Activated naive CD4-positive, alpha-beta T cell treated with anti-CD3 and anti-CD28 coated beads for 36 hours (primary cell): ENCODE measurements at regions of chrX and their contacts with region 1.

Region 1: DNA sequence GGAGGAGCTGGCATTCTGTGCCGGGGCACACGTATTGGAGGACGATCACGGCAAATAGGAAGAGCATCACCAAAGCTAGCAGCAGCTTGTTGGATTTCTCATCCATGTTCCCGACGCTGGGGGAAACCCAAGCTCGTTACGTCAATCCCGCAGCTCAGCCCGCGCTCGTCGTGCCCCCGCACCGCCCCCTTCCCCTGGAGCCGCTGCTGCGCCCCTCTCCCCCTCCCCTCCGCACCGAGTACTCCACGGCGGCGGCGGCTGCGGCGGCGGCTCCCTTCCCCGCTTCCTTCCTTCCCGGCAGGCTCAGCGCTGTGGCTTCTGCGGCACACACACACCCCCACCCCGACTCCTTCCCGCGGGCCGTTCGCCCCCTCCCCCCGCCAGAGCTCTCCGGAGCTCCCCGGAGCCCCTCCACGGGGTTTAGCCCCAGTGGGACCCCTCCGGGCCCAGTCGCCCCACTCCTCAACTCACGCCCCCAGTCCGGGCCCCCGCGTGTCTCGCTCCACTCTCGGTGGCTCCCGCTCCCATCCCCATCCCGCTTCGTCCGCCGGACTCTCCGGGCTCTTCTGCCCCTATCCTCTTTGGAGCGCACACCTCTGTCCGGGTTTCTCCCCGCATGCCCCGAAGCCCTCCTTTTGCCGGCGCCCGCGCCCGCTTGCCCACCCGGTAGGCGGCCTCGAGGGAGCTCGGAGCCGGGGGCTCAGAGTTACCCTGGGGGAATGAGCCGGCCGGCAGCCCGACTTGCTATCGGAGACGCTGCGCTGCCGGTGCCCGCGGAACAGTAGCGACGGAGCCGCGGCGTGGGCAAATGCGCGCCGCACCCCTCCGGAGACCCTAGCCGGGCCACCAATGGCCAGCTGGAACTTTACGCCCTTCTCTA is 978 bp downstream of the HS6ST2 start:
- DNase-seq: peak; percentile 38
- H3K4me3 Mint-ChIP-seq: peak overlapping the region; percentile 77
- H3K27ac Mint-ChIP-seq: no peak overlapping the region
- H3K4me1 Mint-ChIP-seq: peaks cover 2% of the 10 kb centered on the region
- H3K27me3 Mint-ChIP-seq: peaks cover 31% of the 10 kb centered on the region

Region 2: GRCh38 chrX:132737743-132738142 is 219.7 kb before region 1 on chrX:
- CTCF ChIA-PET with region 1: interaction called, 3 read pairs
- intact Hi-C with region 1: loop called (anchors 5 kb)
- DNase-seq: peak; percentile 72
- H3K4me3 Mint-ChIP-seq: no peak overlapping the region
- H3K27ac Mint-ChIP-seq: no peak overlapping the region
- H3K4me1 Mint-ChIP-seq: peaks cover 12% of the 10 kb centered on the region
- H3K27me3 Mint-ChIP-seq: no peaks in the 10 kb centered on the region

Region 3: GRCh38 chrX:132776486-132777210 is 180.8 kb before region 1 on chrX:
- CTCF ChIA-PET with region 1: no interaction called
- intact Hi-C with region 1: loop called (anchors 10 kb)
- DNase-seq: no peak
- H3K4me3 Mint-ChIP-seq: no peak overlapping the region
- H3K27ac Mint-ChIP-seq: no peak overlapping the region
- H3K4me1 Mint-ChIP-seq: peaks cover 16% of the 10 kb centered on the region
- H3K27me3 Mint-ChIP-seq: no peaks in the 10 kb centered on the region